Activated T-helper 2 cell treated with anti-CD3 and anti-CD28 coated beads, Interferon-gamma antibody, Interleukin-2, Interleukin-4, amounts not matched to agents 10 μg/mL and 5 μg/mL and 100 μg/mL, durations not matched to agents 14 hours and 24 hours and 36 hours (primary cell): ENCODE measurements at regions of chr7 and their contacts with region 1.

Region 1: DNA sequence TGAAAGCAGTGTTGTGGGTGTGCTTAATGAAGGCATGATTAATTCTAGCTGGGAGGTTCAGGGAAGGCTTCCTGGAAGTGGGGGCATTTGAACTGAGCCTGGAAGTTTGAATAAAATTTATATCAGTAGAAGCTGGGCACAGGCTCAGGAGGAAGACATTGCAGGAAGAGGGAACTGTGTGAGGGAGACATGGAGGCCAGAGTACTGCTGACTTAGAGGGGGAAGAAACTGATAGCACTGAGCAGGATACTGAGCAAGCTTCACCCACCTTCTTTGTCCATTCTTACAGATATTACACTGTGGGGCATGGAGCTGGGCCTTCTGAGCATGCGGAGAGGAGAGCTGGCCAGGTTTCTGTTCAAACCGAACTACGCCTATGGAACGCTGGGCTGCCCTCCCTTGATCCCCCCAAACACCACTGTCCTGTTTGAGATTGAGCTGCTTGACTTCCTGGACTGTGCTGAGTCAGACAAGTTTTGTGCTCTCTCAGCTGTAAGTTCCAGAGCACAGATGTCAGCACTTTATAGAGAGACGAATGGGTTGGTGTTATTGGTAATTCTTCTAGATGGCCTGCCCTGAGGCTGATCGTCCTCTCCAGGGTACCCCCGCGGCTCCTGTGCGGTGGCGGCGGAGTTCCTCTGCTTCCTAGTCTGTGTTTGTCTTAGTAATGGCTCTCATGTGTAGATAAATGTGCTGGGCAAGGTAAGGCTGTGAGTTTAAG is 2.1 kb downstream of the FKBP6 start:
- DNase-seq: no peak
- H3K4me3 Mint-ChIP-seq: no peak overlapping the region
- H3K27ac Mint-ChIP-seq: no peak overlapping the region
- H3K4me1 Mint-ChIP-seq: peaks cover 1% of the 10 kb centered on the region
- H3K27me3 Mint-ChIP-seq: peaks cover 3% of the 10 kb centered on the region

Region 2: GRCh38 chr7:72467237-72467636 is 862.8 kb before region 1 on chr7:
- intact Hi-C with region 1: no loop called
- DNase-seq: no peak
- H3K4me3 Mint-ChIP-seq: no peak overlapping the region
- H3K27ac Mint-ChIP-seq: no peak overlapping the region
- H3K4me1 Mint-ChIP-seq: no peaks in the 10 kb centered on the region
- H3K27me3 Mint-ChIP-seq: no peaks in the 10 kb centered on the region

Region 3: DNA sequence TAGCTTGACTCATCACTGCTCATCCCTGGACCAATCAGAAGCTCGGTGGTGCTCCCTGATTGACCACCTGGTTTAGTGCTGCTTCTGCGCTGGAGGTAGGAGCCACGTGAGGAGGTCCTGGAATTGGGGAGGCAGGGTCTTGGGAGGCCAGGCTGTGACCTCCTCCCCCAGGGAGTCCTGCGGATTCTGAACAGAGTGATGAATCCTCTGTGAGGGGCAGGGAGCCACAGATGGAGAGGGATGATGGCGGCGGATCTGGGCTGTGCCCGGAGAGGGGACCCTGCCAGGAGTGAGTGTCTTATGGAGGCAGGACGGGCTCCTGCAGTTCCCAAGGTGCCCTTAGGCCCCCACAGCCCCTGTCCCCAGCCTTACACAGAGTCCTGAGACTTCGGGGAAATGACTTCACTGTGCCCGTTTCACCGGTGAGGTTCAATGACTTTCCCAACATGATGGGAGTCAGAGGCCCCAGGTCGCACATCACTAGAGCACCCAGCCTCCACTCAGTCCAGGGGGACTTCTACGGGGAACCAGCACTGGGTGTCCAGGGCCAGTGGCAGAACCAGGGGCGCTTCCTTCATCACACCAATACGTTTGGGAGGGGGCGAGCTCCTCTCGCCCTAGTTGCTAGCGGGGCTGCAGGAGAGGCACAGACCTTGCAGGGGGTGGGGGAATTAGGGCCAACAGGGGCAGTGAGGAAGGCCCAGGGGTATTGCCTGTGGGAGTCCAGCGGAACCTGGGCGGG is 46.8 kb after region 1 on chr7:
- intact Hi-C with region 1: no loop called
- DNase-seq: no peak
- H3K4me3 Mint-ChIP-seq: no peak overlapping the region
- H3K27ac Mint-ChIP-seq: no peak overlapping the region
- H3K4me1 Mint-ChIP-seq: no peaks in the 10 kb centered on the region
- H3K27me3 Mint-ChIP-seq: peaks cover 19% of the 10 kb centered on the region

Region 4: GRCh38 chr7:73451780-73452398 is 121.9 kb after region 1 on chr7:
- intact Hi-C with region 1: loop called (anchors 10 kb)
- DNase-seq: no peak
- H3K4me3 Mint-ChIP-seq: no peak overlapping the region
- H3K27ac Mint-ChIP-seq: no peak overlapping the region
- H3K4me1 Mint-ChIP-seq: peaks cover 23% of the 10 kb centered on the region
- H3K27me3 Mint-ChIP-seq: no peaks in the 10 kb centered on the region